ENCODE measurements at regions of chr5 and their contacts with region 1.

Region 1: DNA sequence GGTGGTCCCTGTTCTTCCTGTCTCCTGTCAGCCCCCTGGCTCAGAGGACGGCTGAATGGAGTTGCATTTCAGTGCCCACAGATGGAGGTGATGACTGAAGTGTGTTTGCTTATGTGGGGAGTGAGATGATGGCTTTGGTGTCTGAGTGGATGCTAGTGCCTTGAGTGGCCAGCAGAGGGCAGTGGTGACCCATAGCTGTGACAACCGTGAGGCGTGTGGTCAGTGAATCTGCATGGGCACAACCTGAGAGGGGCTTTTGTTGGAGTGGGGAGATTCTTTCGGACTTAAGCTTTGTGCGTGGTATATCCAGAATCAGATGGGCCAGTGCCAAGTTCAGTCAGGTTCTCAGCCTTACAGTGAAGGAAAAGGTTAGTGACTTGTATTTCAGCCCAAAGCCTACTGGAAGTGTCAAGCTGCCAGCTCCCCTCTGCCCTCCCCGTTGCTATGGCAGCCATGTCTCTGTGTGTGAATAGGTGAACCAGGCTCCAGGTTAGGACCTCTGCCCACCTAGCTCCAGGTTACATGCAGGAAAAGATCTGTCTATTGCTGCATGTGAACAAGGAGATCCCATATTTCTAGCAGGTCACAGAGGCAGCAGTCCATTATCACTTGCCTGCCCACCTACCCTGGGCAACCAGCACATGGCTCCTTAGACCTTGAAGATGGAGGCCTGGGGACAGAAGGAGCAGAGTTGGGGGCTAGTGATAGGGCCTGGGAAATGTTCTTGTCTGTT is 14.7 kb upstream of the CXXC5 start:
- DNase-seq: peak; percentile 85
- H3K4me3 ChIP-seq: no peak overlapping the region
- H3K27ac ChIP-seq: no peak overlapping the region
- H3K4me1 ChIP-seq: peaks cover 22% of the 10 kb centered on the region
- H3K27me3 ChIP-seq: no peaks in the 10 kb centered on the region
- CTCF ChIP-seq: peak; percentile 93 to 95
- POLR2A ChIP-seq: no peak

Region 2: DNA sequence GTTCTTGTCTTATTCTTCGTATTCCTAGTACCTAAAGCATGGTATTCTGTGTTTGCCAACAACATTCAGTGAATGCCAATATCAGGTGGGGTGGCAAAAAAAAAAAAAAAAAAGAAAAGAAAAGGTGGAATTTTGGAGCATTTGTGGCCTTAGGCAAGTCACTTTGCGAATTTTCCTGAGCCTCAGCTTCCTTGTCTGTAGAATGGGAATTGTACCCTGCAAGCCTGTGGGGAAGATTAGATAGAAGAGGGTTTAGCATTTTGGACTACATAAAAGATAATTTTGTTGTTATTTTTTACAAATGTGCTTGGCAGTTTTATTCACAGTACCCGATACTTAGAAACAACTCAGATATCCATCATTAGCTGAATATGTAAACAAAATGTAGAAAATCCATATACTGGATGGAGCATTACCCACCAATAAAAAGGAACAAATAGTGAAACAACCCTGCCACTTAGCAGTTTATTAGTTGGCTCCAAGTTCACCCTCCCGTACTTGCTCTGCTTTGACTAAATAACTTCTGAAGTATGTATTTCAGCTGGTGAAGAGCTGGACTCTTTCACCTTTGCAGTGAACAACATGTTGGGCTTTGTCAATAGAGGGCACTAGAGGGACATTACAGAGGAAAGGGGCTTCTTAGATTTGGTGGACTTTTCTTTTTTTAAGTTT is 58.7 kb before region 1 on chr5:
- CTCF ChIA-PET with region 1: interaction called, 14 read pairs
- POLR2A ChIA-PET with region 1: no interaction called
- dilution Hi-C with region 1: no loop called
- intact Hi-C with region 1: loop called (anchors 2 kb)
- DNase-seq: peak; percentile 58
- H3K4me3 ChIP-seq: no peak overlapping the region
- H3K27ac ChIP-seq: no peak overlapping the region
- H3K4me1 ChIP-seq: peaks cover 17% of the 10 kb centered on the region
- H3K27me3 ChIP-seq: no peaks in the 10 kb centered on the region
- CTCF ChIP-seq: peak; percentile 45 to 49
- POLR2A ChIP-seq: no peak

Region 3: DNA sequence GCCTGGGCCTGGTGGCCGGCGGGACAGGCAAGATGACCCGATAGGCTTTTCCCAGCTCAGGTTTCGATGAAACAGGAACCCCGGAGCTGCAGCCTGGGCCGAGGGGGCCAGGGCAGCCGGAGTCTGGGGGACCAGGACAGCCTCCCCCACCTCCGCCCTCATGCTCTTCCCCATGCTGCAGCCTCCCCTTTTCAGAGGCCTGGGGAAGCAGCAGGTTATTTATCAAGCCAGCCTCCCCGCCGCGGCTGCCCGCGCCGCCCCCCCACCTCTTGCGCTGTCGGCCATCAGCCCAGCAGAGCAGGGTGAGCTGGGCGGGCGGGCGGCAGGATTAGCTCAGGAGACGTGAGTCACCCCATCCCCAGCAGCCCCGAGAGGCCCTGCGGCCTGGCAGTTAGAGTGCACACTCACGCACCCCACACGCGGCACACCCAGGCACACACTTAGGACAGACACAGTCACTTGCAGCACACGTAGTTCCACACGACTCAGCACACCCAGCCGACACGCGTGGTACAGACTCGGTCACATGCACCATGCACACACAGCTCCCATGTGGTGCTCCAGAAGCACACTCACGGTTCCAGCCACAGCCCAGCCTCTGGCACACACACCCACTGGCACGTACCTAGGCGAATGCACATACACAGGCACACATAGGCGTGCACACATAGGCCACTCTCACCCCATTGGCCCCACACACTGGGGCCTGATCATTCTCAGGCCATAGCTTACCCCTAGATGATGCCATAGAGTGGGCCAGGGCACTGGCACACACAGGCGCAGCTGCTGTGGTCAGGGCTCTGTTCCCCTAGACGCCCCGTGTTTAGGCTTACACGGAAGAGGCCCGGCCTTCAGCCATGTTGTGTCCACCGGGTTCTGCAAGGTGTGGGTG is 27.7 kb after region 1 on chr5:
- CTCF ChIA-PET with region 1: interaction called, 18 read pairs
- POLR2A ChIA-PET with region 1: interaction called, 7 read pairs
- dilution Hi-C with region 1: no loop called
- intact Hi-C with region 1: no loop called
- DNase-seq: peak; percentile 83
- H3K4me3 ChIP-seq: no peak overlapping the region
- H3K27ac ChIP-seq: no peak overlapping the region
- H3K4me1 ChIP-seq: peaks cover 33% of the 10 kb centered on the region
- H3K27me3 ChIP-seq: no peaks in the 10 kb centered on the region
- CTCF ChIP-seq: no peak
- POLR2A ChIP-seq: no peak

Region 4: DNA sequence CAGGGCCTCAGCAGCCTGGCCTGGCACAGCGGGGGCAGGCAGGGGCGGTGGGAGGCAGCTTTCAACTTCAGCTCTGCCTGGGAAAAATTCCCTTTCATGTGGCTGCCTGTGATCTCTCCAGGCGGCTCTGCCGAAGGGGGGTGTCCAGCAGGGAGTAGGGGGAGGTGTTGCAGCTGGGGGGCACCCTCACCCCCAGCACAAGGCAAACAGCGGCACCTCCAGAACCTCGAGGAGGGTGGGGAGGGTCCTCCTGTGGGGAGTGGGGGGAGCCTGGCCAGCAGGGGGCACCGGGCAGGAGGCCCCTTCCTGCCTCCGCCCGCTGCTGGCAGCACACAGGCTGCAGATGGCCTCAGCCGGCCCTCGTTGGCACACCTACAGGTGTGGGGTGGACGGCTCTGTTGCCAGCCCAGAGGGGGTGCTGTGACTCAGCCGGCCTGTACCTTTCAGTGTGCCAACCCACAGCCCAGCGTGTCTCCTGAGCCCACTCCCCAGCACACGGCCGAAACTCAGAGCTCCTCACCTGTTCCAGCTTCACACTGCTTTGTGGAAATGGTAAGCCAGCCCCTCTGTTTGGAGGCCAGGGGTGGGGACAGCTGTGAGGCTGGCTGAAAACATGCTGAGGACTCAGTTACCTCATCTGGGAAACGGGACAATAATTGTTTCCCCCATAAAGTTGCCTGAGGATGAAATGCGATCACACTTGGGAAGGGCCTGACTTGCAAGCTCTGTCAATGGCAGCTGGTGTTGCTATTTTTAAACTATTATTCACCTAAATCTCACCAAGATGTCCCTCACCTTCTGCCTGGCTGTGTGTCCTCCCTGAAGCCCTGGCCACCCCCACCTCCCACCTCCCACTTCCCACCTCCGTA is 51.7 kb after region 1 on chr5:
- CTCF ChIA-PET with region 1: interaction called, 203 read pairs
- POLR2A ChIA-PET with region 1: interaction called, 3 read pairs
- dilution Hi-C with region 1: no loop called
- intact Hi-C with region 1: loop called (anchors 1 kb)
- DNase-seq: no peak
- H3K4me3 ChIP-seq: no peak overlapping the region
- H3K27ac ChIP-seq: no peak overlapping the region
- H3K4me1 ChIP-seq: no peaks in the 10 kb centered on the region
- H3K27me3 ChIP-seq: no peaks in the 10 kb centered on the region
- CTCF ChIP-seq: no peak
- POLR2A ChIP-seq: no peak

Region 5: DNA sequence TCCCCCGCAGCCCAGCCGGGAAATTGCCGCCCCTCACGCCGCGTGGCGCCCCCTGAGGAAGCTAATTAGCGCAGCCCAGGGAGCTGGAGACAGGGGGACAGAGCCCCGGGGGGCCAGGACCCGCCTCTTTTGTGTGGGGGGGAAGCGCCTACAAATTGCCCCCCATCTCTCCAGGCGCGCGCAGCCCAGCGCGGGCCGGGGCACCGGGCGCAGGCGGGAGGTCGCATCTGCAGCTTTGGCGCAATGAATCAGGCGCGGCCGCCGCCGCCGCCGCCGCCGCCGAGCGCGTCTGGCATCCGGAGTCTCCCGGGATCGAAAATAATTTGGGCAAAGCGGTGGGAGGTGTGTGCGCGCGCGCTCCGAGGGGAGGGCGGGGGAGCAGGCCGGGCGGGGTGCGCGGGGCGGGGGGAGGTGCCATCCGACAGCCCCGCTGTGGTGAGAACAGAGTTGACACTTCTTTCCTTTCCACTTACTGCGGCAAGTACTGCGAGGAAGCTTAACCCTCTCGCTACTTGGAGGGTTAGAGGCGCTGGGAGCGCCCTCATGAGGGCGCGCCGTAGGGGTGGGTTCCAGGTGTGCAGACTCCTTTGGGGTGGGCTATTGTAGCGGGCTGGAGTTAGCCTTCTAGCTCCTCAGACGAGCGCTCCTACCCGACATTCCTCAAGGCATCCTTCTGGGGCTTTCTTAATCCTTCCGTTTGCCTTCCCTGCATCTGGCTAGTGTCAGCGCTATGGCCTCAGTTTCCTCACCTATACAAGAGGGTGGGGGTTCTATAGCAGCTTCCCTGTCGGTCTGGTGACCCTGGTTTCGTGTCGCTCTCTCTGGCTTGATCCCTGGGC is 77.8 kb after region 1 on chr5:
- CTCF ChIA-PET with region 1: interaction called, 12 read pairs
- POLR2A ChIA-PET with region 1: no interaction called
- dilution Hi-C with region 1: no loop called
- intact Hi-C with region 1: no loop called
- DNase-seq: no peak
- H3K4me3 ChIP-seq: peak overlapping the region in 1 of 3 experiments; percentile 20
- H3K27ac ChIP-seq: no peak overlapping the region
- H3K4me1 ChIP-seq: peaks cover 7% of the 10 kb centered on the region
- H3K27me3 ChIP-seq: peaks cover 11 to 13% of the 10 kb centered on the region in 2 experiments
- CTCF ChIP-seq: peak in 1 of 2 donors; percentile 12
- POLR2A ChIP-seq: no peak

Region 6: GRCh38 chr5:139774980-139775661 is 141.7 kb after region 1 on chr5:
- CTCF ChIA-PET with region 1: interaction called, 15 read pairs
- POLR2A ChIA-PET with region 1: no interaction called
- dilution Hi-C with region 1: no loop called
- intact Hi-C with region 1: no loop called
- DNase-seq: peak; percentile 47
- H3K4me3 ChIP-seq: no peak overlapping the region
- H3K27ac ChIP-seq: no peak overlapping the region
- H3K4me1 ChIP-seq: no peaks in the 10 kb centered on the region
- H3K27me3 ChIP-seq: peaks cover 7 to 13% of the 10 kb centered on the region in 2 experiments
- CTCF ChIP-seq: peak; percentile 90 to 94
- POLR2A ChIP-seq: no peak

Region 7: DNA sequence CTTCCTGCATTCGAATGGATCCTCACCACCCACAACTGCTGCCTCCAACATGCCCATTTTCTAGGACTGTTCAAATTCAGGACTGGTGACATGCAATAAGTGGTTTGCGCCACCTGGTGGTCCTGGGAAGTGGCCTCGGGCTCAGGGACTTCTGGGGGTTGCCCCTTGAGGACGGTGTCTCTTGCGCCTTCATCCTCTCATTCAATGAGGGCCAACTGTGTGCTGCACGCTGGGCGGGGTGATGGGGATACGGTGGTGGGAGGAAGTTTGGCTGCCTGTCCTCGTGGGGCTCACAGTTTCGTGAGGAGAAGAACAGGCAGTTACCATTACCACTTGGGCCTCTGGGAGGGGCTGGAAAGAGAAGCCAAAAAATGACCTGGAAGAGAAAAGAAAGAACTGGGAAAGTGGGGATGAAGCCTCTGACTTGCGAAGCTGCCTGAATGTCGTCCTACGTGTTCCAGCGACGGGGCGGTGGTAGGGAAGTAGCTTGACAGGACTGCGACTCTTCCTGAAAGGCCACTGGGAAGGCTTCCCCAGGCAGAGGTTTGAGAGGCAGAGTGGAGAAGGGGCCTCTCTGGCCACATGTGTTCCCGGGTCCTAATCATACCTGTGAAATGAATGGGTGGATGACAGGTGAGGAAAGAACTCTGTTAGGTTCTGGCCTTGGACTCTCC is 211.1 kb after region 1 on chr5:
- CTCF ChIA-PET with region 1: no interaction called
- POLR2A ChIA-PET with region 1: no interaction called
- dilution Hi-C with region 1: no loop called
- intact Hi-C with region 1: loop called (anchors 1 kb)
- DNase-seq: peak; percentile 62
- H3K4me3 ChIP-seq: no peak overlapping the region
- H3K27ac ChIP-seq: no peak overlapping the region
- H3K4me1 ChIP-seq: no peaks in the 10 kb centered on the region
- H3K27me3 ChIP-seq: peaks cover 4 to 7% of the 10 kb centered on the region in 2 experiments
- CTCF ChIP-seq: peak; percentile 83 to 94
- POLR2A ChIP-seq: no peak

Region 8: GRCh38 chr5:139919308-139919707 is 285.8 kb after region 1 on chr5:
- CTCF ChIA-PET with region 1: no interaction called
- POLR2A ChIA-PET with region 1: no interaction called
- dilution Hi-C with region 1: no loop called
- intact Hi-C with region 1: no loop called
- DNase-seq: no peak
- H3K4me3 ChIP-seq: no peak overlapping the region
- H3K27ac ChIP-seq: no peak overlapping the region
- H3K4me1 ChIP-seq: no peaks in the 10 kb centered on the region
- H3K27me3 ChIP-seq: peaks cover 6 to 20% of the 10 kb centered on the region in 2 experiments
- CTCF ChIP-seq: no peak
- POLR2A ChIP-seq: no peak